Kidney (tissue), 22 donors: ENCODE measurements at regions of chr2 and their contacts with region 1.

Region 1: DNA sequence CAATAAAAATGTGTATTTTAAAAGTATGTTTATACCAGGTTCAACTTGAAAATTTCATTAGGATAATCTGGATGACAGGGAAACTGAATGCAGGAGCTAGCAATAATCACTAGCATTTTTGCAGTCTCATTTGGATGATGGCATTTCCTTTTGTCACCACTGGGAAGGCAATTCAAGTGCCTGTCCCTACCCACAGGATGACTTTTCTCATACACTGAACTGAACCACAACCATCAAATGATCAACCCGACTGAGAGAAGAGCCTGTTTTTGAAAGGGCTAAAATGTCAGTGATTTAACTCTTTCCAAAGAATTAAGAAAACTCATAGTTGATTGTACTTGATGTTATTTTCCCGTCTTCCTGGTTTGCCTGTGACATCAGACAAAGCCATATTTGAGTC is 115.0 kb downstream of the FAM124B start:
- DNase-seq: no peak
- H3K4me3 ChIP-seq: no peak overlapping the region
- H3K27ac ChIP-seq: no peak overlapping the region
- H3K4me1 ChIP-seq: no peaks in the 10 kb centered on the region
- H3K27me3 ChIP-seq: no peaks in the 10 kb centered on the region
- CTCF ChIP-seq: no peak

Region 2: GRCh38 chr2:223993621-223994232 is 293.2 kb before region 1 on chr2:
- intact Hi-C with region 1: loop called (anchors 5 kb)
- DNase-seq: peak in 4 of 5 donors; percentile 65 to 94 (median 80)
- H3K4me3 ChIP-seq: no peak overlapping the region
- H3K27ac ChIP-seq: peak overlapping the region in 1 of 2 donors; percentile 36
- H3K4me1 ChIP-seq: peaks cover 3 to 14% (median 10%) of the 10 kb centered on the region in 3 donors
- H3K27me3 ChIP-seq: no peaks in the 10 kb centered on the region
- CTCF ChIP-seq: peak; percentile 84